A673 (cell line): ENCODE measurements at regions of chr1 and their contacts with region 1.

Region 1: DNA sequence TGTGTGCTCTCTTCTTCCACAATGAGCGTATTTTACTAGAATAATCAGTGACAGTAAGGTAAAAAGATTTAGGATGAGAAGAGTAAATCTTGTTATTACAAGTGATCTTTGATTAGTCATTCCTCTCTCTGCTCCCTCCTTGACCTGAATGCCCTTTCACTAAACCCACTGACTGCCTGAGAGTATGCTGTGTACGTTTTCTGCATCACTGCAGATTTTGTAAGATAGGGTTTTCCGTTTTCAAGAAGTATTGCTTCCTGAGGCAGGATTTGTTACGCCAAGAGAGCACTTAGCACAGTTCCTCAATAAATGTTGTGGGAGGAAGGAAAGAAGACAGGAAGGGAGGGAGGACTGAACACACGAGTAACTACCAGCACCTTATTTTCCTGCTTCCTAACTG is 7.7 kb upstream of the LAMB3 start:
- DNase-seq: peak; percentile 89
- H3K4me3 ChIP-seq: no peak overlapping the region
- H3K27ac ChIP-seq: peak overlapping the region; percentile 78
- H3K4me1 ChIP-seq: peaks cover 39% of the 10 kb centered on the region
- H3K27me3 ChIP-seq: no peaks in the 10 kb centered on the region
- CTCF ChIP-seq: no peak

Region 2: GRCh38 chr1:209633335-209633997 is 26.4 kb before region 1 on chr1:
- CTCF ChIA-PET with region 1: no interaction called
- POLR2A ChIA-PET with region 1: interaction called, 10 read pairs
- intact Hi-C with region 1: no loop called
- DNase-seq: no peak
- H3K4me3 ChIP-seq: no peak overlapping the region
- H3K27ac ChIP-seq: no peak overlapping the region
- H3K4me1 ChIP-seq: peaks cover 14% of the 10 kb centered on the region
- H3K27me3 ChIP-seq: no peaks in the 10 kb centered on the region
- CTCF ChIP-seq: no peak

Region 3: GRCh38 chr1:209900734-209901133 is 240.8 kb after region 1 on chr1:
- CTCF ChIA-PET with region 1: no interaction called
- POLR2A ChIA-PET with region 1: no interaction called
- intact Hi-C with region 1: no loop called
- DNase-seq: no peak
- H3K4me3 ChIP-seq: no peak overlapping the region
- H3K27ac ChIP-seq: no peak overlapping the region
- H3K4me1 ChIP-seq: peaks cover 20% of the 10 kb centered on the region
- H3K27me3 ChIP-seq: no peaks in the 10 kb centered on the region
- CTCF ChIP-seq: no peak